ENCODE measurements at regions of chr5 and their contacts with region 1.

Region 1: GRCh38 chr5:134004592-134005375 is at the start of gene VDAC1:
- DNase-seq: peak; percentile 78
- H3K4me3 Mint-ChIP-seq: peak within 1 kb of the TSS; percentile 93
- H3K27ac Mint-ChIP-seq: peak within 1 kb of the TSS; percentile 97
- H3K4me1 Mint-ChIP-seq: peaks cover 53% of the 10 kb centered on the region
- H3K27me3 Mint-ChIP-seq: peaks cover 2% of the 10 kb centered on the region
- total RNA-seq, gene VDAC1: 440 and 442 TPM in 2 replicates

Region 2: DNA sequence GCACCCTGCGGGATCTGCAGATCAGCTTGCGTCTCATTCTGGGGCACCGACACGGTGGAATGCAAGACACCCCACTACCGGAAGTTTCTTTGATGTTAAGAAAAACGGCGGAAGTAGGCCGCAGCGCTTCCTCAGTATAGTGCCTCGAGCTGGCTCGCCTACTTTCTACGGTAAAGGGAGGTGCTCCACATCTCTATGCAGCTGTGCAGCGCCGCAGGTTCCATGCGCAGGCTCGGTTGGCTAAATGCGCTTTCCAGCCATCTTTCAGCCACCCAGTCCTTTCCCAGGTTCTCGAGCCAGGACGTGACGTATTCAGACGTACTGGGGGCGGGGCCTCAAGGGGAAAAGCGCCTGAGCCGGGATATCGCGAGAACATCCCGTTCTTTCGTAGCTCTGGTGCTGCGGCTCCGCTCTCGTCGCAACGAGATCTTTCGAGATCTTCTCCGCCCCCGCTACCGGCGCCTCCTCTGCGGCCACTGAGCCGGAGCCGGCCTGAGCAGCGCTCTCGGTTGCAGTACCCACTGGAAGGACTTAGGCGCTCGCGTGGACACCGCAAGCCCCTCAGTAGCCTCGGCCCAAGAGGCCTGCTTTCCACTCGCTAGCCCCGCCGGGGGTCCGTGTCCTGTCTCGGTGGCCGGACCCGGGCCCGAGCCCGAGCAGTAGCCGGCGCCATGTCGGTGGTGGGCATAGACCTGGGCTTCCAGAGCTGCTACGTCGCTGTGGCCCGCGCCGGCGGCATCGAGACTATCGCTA is 953.0 kb before region 1 on chr5 and contains the start of gene HSPA4:
- intact Hi-C with region 1: loop called (anchors 2 kb)
- DNase-seq: peak; percentile 96
- H3K4me3 Mint-ChIP-seq: peak within 1 kb of the TSS; percentile 96
- H3K27ac Mint-ChIP-seq: peak within 1 kb of the TSS; percentile 100
- H3K4me1 Mint-ChIP-seq: peaks cover 46% of the 10 kb centered on the region
- H3K27me3 Mint-ChIP-seq: peaks cover 2% of the 10 kb centered on the region
- total RNA-seq, gene HSPA4: 244 and 247 TPM in 2 replicates

Region 3: DNA sequence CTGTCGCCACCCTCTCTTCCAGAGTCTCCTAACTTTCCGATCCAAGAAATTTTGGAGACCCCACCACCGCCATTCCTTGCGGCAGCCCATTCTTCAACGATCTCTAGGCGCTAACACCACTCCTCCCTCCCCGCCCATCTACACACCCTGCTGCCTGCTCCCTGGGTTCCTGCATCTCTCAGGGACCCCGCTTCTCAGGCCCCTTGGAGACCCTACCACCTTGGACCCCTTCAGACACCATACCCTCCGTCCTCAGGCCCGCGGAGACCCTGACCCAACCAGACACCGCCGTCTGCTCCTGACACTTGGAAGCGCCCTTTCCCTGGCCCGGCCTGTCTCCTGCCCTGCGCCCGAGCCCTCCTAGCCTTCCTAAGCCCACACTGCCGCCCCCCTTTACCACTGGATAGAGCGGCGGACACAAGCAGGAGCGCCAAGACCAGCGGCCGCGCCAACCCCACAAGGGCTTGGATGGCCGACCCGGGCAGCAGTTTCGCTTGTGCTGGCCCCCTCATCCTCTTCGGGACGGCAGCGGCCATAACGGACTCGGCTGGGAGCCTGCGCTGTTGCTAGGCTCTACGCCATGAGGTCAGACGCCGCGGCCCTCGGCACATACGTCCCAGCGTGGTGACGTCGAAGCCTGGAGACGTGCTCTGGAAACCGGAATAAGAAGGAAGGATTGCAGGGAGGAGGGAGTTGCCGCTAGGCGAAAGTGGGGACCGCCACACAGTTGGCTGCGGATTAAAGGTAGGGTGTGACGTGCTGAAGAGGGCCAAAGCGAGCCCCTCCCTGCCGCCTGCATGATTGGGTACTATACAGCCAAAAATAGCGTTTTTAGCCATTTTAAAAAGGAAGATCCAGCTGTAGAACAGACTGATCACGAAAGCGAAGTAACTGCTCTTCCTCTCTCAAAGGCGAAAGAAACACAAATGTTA is 36.5 kb before region 1 on chr5 and contains the start of gene C5orf15:
- intact Hi-C with region 1: loop called (anchors 1 kb)
- DNase-seq: peak; percentile 92
- H3K4me3 Mint-ChIP-seq: peak within 1 kb of the TSS; percentile 98
- H3K27ac Mint-ChIP-seq: peak within 1 kb of the TSS; percentile 96
- H3K4me1 Mint-ChIP-seq: peaks cover 55% of the 10 kb centered on the region
- H3K27me3 Mint-ChIP-seq: no peaks in the 10 kb centered on the region
- total RNA-seq, gene C5orf15: 50.0 and 50.8 TPM in 2 replicates

Region 4: GRCh38 chr5:134026521-134027268 is 21.9 kb after region 1 on chr5:
- intact Hi-C with region 1: no loop called
- DNase-seq: peak; percentile 27
- H3K4me3 Mint-ChIP-seq: no peak overlapping the region
- H3K27ac Mint-ChIP-seq: no peak overlapping the region
- H3K4me1 Mint-ChIP-seq: no peaks in the 10 kb centered on the region
- H3K27me3 Mint-ChIP-seq: peaks cover 12% of the 10 kb centered on the region

Region 5: DNA sequence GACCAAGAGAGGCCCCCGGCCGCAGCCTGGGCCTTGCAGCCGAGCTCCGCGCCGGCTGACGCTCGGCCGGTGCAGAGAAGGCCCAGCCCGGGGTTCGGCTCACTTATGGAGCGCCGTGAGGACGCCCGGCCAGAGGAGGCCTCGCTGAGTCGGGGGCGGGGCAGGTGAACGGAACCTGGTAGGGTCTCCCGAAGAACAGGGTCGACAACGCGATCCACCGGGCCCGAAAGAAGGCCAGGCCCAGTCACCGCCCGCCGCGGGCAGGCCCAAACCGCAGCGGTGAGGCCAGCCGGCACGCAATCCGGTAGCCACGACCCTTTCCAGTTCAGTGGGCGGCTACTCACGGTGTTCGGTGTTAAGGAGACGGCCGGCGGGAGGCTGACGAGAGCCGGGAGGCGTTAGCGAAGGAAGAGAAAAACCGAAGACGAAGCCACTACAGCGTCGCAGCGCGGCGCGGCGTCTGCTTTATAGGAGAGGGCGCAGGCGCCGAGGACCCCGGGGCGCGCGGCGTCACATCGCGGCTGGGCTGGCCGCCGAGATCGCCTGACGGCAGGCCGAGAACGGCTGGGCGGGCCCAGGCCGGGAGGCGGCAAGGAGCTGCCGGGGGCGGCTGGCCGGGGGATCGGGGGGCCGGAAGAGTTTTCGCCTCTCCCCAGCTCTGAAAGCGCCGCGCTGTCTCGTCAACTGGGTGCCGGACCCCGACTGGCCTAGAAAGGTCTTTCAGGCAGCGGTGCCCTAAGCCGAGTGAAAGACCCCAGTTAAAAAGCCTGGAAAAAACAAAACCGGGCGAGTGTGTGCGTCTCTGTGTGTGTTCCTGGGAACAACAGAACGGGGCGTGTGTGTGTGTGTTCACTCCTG is 172.0 kb after region 1 on chr5 and contains the start of gene SKP1:
- intact Hi-C with region 1: loop called (anchors 1 kb)
- DNase-seq: peak; percentile 85
- H3K4me3 Mint-ChIP-seq: peak within 1 kb of the TSS; percentile 96
- H3K27ac Mint-ChIP-seq: peak within 1 kb of the TSS; percentile 97
- H3K4me1 Mint-ChIP-seq: peaks cover 28% of the 10 kb centered on the region
- H3K27me3 Mint-ChIP-seq: peaks cover 6% of the 10 kb centered on the region
- total RNA-seq, gene SKP1: 259 and 265 TPM in 2 replicates

Region 6: GRCh38 chr5:134758504-134759341 is 753.9 kb after region 1 on chr5 and contains the start of gene DDX46:
- intact Hi-C with region 1: loop called (anchors 2 kb)
- DNase-seq: peak; percentile 94
- H3K4me3 Mint-ChIP-seq: peak within 1 kb of the TSS; percentile 100
- H3K27ac Mint-ChIP-seq: peak within 1 kb of the TSS; percentile 99
- H3K4me1 Mint-ChIP-seq: peaks cover 28% of the 10 kb centered on the region
- H3K27me3 Mint-ChIP-seq: no peaks in the 10 kb centered on the region
- total RNA-seq, gene DDX46: 78.3 and 84.4 TPM in 2 replicates

Region 7: DNA sequence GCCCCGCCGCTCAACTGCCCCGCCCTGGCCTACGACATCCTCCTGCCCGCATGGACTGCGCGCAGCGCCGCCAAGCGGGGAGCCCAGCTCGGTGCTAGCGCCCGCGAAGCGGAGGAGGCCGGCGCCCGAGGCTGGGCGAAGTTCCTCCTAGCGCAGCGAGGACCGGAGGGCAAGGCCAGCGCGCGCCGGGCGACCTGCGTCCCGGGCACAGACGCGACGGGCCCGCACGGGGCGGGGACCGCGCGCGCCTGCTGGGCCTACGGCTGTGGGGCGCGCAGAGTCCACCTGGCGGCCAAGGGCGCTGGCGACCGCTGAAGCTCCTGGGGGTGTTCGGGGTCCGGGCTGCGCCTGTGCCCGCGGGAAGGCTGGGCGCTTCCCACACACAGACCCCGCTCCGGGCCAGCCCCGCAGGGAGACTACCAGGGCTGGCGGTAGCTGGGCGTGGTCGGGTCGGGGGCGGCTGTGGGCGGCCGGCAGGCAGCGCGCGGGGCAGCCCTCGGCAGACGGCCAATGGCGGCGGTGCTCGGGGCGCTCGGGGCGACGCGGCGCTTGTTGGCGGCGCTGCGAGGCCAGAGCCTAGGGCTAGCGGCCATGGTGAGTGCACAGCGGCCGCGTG is 900.0 kb after region 1 on chr5 and contains the start of gene PCBD2:
- intact Hi-C with region 1: loop called (anchors 10 kb)
- DNase-seq: peak; percentile 91
- H3K4me3 Mint-ChIP-seq: peak within 1 kb of the TSS; percentile 94
- H3K27ac Mint-ChIP-seq: peak within 1 kb of the TSS; percentile 99
- H3K4me1 Mint-ChIP-seq: peaks cover 15% of the 10 kb centered on the region
- H3K27me3 Mint-ChIP-seq: no peaks in the 10 kb centered on the region
- total RNA-seq, gene PCBD2: 13.5 and 17.2 TPM in 2 replicates

Region 8: GRCh38 chr5:134935711-134936602 is 931.2 kb after region 1 on chr5:
- intact Hi-C with region 1: no loop called
- DNase-seq: no peak
- H3K4me3 Mint-ChIP-seq: no peak overlapping the region
- H3K27ac Mint-ChIP-seq: no peak overlapping the region
- H3K4me1 Mint-ChIP-seq: no peaks in the 10 kb centered on the region
- H3K27me3 Mint-ChIP-seq: no peaks in the 10 kb centered on the region

Measured in activated T-helper 1 cell treated with anti-CD3 and anti-CD28 coated beads, Interleukin-12 subunit alpha, Interleukin-12 subunit beta, Interleukin-2, Interleukin-4 antibody, amounts not matched to agents 30 ng/mL and 10 ng/mL and 1 ng/mL, durations not matched to agents 14 hours and 24 hours and 36 hours (primary cell).